ENCODE measurements at regions of chr5 and their contacts with region 1.

Region 1: DNA sequence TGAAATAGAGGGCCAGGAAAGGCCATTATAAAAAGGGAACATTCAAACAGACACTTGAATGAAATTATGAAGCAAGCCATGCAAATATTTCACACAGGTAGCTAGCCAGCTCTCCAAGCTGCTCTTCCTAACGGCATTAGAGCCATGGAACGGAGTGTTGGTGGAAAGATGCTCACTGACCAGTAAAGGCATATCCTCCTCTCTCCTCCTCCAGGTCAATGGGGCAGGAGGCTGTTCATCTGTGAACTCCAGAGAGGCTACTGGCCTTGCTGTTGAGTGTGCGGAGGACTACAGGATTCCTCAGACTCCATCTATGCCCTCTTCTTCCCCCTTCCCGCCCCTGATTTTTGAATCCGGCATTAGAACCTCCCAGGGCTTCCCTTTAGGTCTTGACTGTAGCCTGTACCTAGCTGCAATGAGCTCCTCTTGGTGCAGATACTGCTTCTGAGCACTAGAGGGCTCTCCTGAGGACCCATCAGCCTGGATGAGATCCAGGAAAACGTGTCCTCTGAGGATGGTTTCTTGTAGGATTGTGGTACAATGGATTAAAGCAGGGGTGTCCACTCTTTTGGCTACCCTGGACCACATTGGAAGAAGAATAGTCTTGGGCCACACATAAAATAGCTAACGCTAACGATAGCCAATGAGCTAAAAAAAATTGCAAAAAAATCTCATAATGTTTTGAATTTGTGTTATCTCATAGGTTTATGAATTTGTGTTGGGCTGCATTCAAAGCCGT is 162.2 kb downstream of the SREK1 start:
- DNase-seq: no peak
- ATAC-seq: peak; percentile 65
- H3K4me3 Mint-ChIP-seq: no peak overlapping the region
- H3K27ac Mint-ChIP-seq: no peak overlapping the region
- H3K4me1 Mint-ChIP-seq: no peaks in the 10 kb centered on the region
- H3K27me3 Mint-ChIP-seq: peaks cover 15% of the 10 kb centered on the region
- CTCF ChIP-seq: no peak

Region 2: DNA sequence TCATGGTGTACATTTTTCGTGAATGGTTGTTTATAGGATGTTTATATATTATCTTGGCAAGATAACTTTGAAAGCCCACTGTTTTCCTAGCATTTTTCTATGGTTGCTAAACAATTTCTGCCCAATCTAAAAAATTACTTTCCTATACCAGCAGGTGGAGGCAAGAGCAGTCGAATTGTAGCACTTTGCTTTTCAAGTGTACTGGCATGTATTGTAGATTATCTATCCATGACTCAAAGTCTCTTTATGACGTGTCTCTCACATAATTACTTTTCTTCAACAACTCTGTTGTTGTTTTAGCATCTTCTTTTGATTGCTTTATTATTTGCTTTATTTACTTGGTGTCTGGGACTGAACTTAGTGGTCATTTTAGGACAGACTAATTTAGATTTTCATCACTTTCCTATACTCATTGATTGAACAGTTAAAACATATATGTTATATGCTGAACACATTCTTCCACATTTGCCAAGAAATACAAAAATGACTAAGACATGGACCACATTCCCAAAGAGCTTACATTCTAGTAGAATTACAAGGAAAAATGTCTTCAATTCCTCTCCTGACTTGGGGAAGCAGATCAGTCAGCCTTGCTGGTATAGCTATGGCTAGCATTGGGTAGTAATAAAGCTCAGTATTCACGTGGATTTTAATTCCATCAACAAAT is 563.6 kb before region 1 on chr5:
- CTCF ChIA-PET with region 1: interaction called, 5 read pairs
- POLR2A ChIA-PET with region 1: no interaction called
- intact Hi-C with region 1: loop called (anchors 1 kb)
- DNase-seq: no peak
- ATAC-seq: peak; percentile 54
- H3K4me3 Mint-ChIP-seq: no peak overlapping the region
- H3K27ac Mint-ChIP-seq: no peak overlapping the region
- H3K4me1 Mint-ChIP-seq: peaks cover 5% of the 10 kb centered on the region
- H3K27me3 Mint-ChIP-seq: no peaks in the 10 kb centered on the region
- CTCF ChIP-seq: no peak

Region 3: GRCh38 chr5:66277981-66278380 is 28.3 kb before region 1 on chr5:
- CTCF ChIA-PET with region 1: no interaction called
- POLR2A ChIA-PET with region 1: no interaction called
- intact Hi-C with region 1: no loop called
- DNase-seq: no peak
- ATAC-seq: no peak
- H3K4me3 Mint-ChIP-seq: no peak overlapping the region
- H3K27ac Mint-ChIP-seq: no peak overlapping the region
- H3K4me1 Mint-ChIP-seq: no peaks in the 10 kb centered on the region
- H3K27me3 Mint-ChIP-seq: peaks cover 28% of the 10 kb centered on the region
- CTCF ChIP-seq: no peak

Region 4: GRCh38 chr5:66406761-66407336 is 100.6 kb after region 1 on chr5:
- CTCF ChIA-PET with region 1: no interaction called
- POLR2A ChIA-PET with region 1: no interaction called
- intact Hi-C with region 1: no loop called
- DNase-seq: no peak
- ATAC-seq: no peak
- H3K4me3 Mint-ChIP-seq: no peak overlapping the region
- H3K27ac Mint-ChIP-seq: no peak overlapping the region
- H3K4me1 Mint-ChIP-seq: no peaks in the 10 kb centered on the region
- H3K27me3 Mint-ChIP-seq: peaks cover 16% of the 10 kb centered on the region
- CTCF ChIP-seq: no peak

Region 5: DNA sequence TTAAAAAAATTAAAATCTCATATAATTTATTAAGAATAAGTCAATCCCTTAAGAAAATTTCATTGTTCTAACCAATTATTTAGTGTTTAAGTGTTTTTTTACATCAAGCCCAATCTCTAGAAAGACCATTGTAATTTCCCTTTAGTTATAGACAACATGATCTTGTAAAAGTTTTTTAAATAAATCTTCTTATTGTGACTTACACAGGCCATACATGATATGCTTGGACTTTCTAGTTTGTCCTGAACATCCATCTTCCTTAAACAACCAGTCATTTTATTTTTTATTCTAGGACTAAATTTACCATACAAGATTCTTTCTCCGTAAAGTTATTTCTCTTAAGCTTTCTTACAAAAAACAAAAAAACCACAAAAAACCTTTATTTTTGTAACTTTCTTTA is 163.4 kb after region 1 on chr5:
- CTCF ChIA-PET with region 1: interaction called, 9 read pairs
- POLR2A ChIA-PET with region 1: no interaction called
- intact Hi-C with region 1: loop called (anchors 1 kb)
- DNase-seq: no peak
- ATAC-seq: no peak
- H3K4me3 Mint-ChIP-seq: no peak overlapping the region
- H3K27ac Mint-ChIP-seq: no peak overlapping the region
- H3K4me1 Mint-ChIP-seq: peaks cover 15% of the 10 kb centered on the region
- H3K27me3 Mint-ChIP-seq: no peaks in the 10 kb centered on the region
- CTCF ChIP-seq: no peak

Region 6: DNA sequence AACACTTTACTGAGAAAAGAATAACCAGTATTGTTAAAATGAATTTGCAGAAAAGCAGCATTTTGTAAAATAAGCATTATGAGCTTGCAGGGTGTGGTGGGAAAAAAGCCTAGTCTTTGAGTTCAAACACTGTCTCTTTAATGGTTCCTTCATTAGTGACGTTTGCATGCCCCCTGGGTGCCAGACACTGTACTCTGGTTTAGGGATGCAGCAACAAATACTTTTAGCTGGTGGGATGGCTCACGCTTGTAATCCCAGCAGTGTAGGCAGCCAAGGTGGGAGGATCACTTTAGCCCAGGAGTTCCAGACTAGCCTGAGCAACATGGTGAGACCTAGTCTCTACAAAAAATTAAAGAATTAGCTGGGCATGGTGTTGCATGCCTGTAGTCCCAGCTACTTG is 352.2 kb after region 1 on chr5:
- CTCF ChIA-PET with region 1: interaction called, 9 read pairs
- POLR2A ChIA-PET with region 1: no interaction called
- intact Hi-C with region 1: loop called (anchors 1 kb)
- DNase-seq: no peak
- ATAC-seq: no peak
- H3K4me3 Mint-ChIP-seq: no peak overlapping the region
- H3K27ac Mint-ChIP-seq: no peak overlapping the region
- H3K4me1 Mint-ChIP-seq: no peaks in the 10 kb centered on the region
- H3K27me3 Mint-ChIP-seq: no peaks in the 10 kb centered on the region
- CTCF ChIP-seq: no peak

Region 7: DNA sequence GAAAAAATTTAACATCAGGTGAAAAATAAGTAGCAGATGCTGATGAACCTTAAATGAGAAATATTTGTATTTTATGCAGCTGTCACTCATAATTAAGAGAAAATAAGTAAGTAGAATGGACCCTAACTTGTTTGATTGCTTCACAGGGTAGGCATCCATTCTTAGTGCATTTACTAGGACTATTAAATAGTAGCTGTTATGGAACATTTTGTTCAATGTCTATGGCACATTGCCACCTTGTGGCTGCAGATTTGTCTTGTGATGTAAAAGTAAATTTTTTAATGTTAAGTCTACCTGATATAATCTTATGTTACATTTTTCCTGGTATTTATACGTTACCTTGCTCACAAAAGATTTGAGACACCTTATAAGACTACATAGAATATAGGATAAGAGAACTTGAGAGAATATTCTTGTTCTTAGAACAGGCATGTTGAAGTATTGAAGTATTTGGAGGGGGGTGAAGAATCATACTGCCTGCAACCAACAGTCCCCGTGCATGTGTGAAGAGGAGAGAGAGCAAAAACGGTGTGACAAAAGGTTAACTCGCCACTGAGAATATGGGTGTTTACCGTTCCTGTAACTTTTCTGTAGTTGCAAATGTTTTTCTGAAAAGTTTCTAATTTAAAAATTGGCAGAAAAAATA is 451.0 kb after region 1 on chr5:
- CTCF ChIA-PET with region 1: interaction called, 302 read pairs
- POLR2A ChIA-PET with region 1: no interaction called
- intact Hi-C with region 1: loop called (anchors 1 kb)
- DNase-seq: no peak
- ATAC-seq: no peak
- H3K4me3 Mint-ChIP-seq: no peak overlapping the region
- H3K27ac Mint-ChIP-seq: no peak overlapping the region
- H3K4me1 Mint-ChIP-seq: peaks cover 9% of the 10 kb centered on the region
- H3K27me3 Mint-ChIP-seq: peaks cover 11% of the 10 kb centered on the region
- CTCF ChIP-seq: no peak

Region 8: DNA sequence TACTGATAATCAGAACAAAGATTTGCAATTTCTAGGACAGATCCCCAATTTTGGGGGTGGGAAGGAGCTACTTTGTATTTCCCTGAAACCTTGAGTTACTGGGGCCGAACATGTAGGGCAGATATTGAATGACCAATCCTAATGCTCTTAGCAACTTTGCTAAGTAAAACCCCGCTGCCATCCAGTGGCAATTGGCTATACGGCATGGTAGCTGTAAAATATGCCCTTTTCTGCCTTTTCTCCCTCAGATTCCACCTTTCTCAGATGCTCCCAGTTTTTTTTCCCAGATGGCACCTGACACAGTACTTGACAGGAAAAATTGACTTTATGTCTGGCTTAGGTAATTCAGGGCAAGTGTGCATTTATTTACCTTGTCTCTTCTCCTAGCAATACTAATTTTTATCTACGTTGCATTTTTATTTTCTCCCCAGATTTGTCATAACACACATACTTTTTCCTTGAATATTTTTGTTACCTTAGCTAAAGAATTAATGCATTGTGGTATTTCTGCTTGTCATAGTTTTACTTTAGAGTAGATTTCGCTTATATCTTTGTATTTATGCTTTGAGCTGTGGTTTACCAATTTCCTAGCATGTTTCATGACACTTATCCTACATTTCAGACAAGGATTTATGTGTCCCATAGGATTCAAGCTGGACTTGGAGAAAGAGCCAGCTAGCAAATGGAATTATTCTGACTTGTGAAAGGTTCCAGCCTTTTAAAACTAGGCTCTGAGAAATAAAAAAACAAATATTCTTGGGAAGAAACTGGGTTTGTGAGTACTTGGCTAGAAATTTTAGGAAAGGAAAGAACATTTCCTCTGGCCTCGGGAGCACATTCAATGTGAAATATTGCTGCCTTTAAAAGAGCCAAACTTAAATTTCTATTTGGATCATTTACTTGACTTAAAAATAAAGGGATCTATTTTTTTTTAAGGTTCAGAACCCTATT is 1946.7 kb after region 1 on chr5:
- CTCF ChIA-PET with region 1: no interaction called
- POLR2A ChIA-PET with region 1: no interaction called
- intact Hi-C with region 1: loop called (anchors 10 kb)
- DNase-seq: no peak
- ATAC-seq: peak; percentile 75
- H3K4me3 Mint-ChIP-seq: no peak overlapping the region
- H3K27ac Mint-ChIP-seq: no peak overlapping the region
- H3K4me1 Mint-ChIP-seq: peaks cover 83% of the 10 kb centered on the region
- H3K27me3 Mint-ChIP-seq: no peaks in the 10 kb centered on the region
- CTCF ChIP-seq: no peak

Measured in activated B cell treated with CpG ODN at 0.5 μM for 24 hours (primary cell).